Dorsolateral prefrontal cortex (tissue), 120 donors: ENCODE measurements at regions of chr20 and their contacts with region 1.

Region 1: DNA sequence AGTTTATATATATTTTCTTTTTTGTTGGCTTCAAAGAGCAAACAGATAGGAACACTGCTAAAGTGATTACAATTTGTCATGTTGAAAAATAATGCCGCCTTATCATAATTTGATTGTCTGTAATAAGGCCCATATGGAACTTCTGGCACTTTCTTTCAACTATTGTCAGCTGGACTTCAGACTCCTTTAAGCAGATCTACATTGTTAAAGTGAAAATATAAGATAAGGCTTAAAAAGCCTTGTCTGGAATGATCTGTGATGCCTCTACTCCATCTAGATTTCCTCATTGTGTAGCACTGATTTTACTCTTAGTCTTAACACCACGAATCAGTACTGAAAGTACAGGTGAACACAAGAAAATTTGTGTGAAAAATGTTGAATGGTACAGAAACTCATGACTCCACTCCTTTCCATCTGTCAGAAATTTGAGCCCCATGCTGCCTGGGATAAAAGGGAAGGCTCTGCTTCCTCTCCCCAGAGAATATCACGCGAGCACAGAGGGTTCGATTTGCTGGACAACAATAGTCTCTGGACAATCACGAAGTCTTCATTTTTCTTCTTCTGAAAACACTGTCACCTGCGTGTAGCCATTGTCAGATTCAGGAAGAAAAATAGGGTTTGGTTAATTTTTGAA is 56.0 kb downstream of the BCAS1 start:
- DNase-seq: no peak
- H3K4me3 ChIP-seq: peak overlapping the region in 21 of 59 donors; percentile 1 to 46 (median 12)
- H3K27ac ChIP-seq: peak overlapping the region in 55 of 59 donors; percentile 2 to 90 (median 70)
- H3K27me3 ChIP-seq: no peaks in the 10 kb centered on the region
- CTCF ChIP-seq: no peak

Region 2: GRCh38 chr20:53957451-53958172 is 56.8 kb before region 1 on chr20:
- intact Hi-C with region 1: loop called in 1 of 2 experiments (anchors 5 kb)
- DNase-seq: no peak
- H3K4me3 ChIP-seq: no peak overlapping the region
- H3K27ac ChIP-seq: peak overlapping the region in 2 of 59 donors; percentile 15 to 41
- H3K27me3 ChIP-seq: peaks cover 0 to 2% (median 0%) of the 10 kb centered on the region in 45 donors
- CTCF ChIP-seq: no peak